Left ventricle myocardium superior (tissue), 1 donor: ENCODE measurements at regions of chr10 and their contacts with region 1.

Region 1: DNA sequence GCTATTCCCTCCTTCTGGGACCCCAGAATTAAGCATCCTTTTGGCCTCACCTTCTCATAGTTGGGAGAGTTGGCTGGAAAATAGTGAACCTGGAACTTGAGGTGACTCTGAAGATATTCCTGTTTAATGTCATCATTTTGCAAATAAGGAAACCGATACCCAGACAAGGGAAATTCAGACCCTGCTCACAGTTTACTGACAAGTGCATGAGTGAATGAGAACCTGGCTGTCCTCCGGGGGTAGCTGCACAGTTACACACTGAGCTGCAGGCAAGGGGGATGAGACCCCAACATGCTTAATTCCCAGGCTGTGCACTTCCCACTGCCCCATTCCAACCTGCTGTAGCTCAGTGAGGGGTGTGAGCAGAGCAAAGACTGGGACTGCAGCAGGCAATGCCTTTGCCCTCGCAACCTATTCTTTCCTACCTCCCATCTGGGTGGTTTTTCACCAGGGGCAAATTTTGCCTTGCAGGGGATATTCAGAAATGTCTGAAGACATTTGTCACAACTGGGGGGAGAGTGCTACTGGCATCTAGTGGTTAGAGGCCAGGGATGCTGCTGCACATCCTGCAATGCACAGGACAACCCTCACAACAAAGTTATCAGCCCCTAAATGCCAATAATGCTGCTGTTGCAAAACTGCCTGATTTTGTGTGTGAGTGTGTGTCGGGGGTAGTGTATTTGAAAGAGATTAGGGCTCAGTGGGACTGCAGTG is 136.2 kb downstream of the SORCS3 start:
- DNase-seq: no peak
- ATAC-seq: no peak

Region 2: DNA sequence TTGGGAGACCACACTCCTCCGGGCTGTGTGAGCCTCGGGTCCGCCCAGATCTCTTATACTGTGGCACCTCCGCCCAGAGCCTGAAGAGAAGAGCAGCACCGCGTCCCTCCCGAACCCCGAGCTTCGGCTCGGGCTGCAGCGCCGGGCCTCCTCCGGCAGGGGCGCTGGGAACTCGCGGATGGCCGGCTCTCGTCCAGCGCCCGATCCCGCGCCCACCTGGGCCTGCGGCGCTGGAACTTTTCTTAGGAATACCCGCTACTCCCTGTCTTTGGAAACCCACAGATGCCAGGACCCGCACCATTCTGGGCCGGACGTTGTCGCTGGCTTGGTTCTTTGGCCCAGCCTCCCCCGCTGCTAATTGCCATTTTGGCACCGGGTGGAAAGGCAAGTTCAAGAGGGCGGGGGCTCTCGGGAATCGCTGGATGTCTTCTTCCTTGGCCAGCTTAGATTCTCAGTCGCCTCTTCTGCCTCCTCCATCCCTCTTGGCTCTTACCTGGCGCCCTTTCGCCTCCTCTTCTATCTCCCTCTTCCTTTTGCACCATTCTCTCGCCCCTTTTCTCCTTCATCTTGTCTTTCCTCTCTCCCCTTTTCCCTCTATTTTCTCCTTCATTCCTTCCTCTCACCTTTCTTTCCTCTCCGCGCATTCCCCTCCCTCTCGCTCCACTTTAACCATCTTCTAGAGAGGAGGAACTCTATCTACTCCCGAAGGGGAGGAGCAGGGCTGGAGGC is 138.2 kb before region 1 on chr10:
- intact Hi-C with region 1: no loop called
- DNase-seq: no peak
- ATAC-seq: peak; percentile 48

Region 3: DNA sequence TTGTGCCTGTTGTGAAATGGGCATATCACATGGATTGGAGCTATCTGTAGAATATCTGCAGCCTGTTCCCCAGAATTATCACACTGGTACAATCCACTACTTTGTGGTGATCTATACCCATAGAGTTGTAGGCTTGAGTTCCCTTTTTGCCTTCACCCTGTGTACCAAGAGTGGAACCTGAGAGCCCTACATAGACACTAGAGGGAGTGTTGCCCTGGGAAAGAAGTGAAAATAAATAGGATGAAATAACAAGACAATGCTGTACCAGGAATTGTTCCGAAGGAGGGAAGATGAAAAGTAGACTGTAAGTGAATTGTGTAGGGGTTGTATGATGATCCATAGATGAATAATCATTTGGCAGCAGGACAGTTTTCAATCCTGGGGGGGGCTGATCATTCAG is 127.2 kb before region 1 on chr10:
- intact Hi-C with region 1: loop called (anchors 10 kb)
- DNase-seq: no peak
- ATAC-seq: peak; percentile 50